SK-N-SH (cell line): ENCODE measurements at regions of chr1 and their contacts with region 1.

Region 1: GRCh38 chr1:201436393-201436792 is 14.9 kb upstream of the TNNI1 start:
- DNase-seq: no peak
- H3K4me3 ChIP-seq: no peak overlapping the region
- H3K27ac ChIP-seq: no peak overlapping the region
- H3K4me1 ChIP-seq: peaks cover 4 to 5% of the 10 kb centered on the region in 2 experiments; a peak in 2 of 4 replicates
- H3K27me3 ChIP-seq: no peaks in the 10 kb centered on the region; the same call in 1 of the 2 replicates
- CTCF ChIP-seq: peak; percentile 13; the same call in 1 of the 2 replicates
- EP300 ChIP-seq: no peak
- RAD21 ChIP-seq: no peak

Region 2: DNA sequence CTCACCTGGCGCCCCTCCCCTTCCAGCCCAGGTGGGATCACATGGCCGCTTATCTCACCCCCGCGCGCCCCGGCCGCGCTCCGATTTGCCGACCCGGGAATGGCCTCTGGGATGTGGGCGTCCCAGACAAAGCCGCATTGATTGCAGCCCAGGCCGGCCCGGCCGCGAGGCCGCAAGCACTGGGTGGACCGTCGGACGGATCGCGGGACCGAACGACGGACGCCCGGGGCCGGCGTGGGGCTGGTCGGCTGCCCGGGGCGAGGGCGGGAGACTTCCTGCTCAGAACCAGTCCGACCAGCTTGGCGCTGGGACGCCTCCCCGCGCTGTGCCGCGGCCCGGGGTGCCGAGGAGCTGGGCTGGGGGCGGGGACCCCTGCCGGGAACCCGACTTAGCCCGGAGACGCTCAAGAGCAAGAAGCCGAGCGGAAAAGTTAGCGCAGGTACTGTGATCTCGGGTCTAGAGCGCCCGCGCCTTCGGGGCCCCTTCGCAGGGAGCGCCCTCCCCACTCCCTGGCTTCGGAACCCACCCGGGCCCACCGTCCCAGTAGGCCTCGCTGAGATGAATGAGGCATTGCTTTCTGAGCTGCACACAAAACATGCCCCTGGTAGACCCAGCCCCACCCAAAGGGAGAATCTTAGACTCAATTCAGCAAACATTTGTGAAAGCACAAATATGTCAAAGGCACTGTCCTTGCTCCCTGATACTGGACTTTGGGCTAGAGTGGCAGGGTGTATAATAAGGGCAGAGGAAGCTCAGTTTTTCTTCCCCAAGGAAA is 36.9 kb before region 1 on chr1:
- CTCF ChIA-PET with region 1: interaction called, 11 read pairs
- POLR2A ChIA-PET with region 1: no interaction called
- DNase-seq: no peak
- H3K4me3 ChIP-seq: no peak overlapping the region
- H3K27ac ChIP-seq: no peak overlapping the region
- H3K4me1 ChIP-seq: peaks cover 0 to 9% of the 10 kb centered on the region in 2 experiments; a peak in 1 of 4 replicates
- H3K27me3 ChIP-seq: peaks cover 35% of the 10 kb centered on the region; the same call in 1 of the 2 replicates
- CTCF ChIP-seq: no peak
- EP300 ChIP-seq: no peak
- RAD21 ChIP-seq: no peak

Region 3: GRCh38 chr1:201447911-201448871 is 11.8 kb after region 1 on chr1:
- CTCF ChIA-PET with region 1: interaction called, 78 read pairs
- POLR2A ChIA-PET with region 1: no interaction called
- DNase-seq: peak; percentile 80
- H3K4me3 ChIP-seq: no peak overlapping the region; a peak in 1 of 4 replicates
- H3K27ac ChIP-seq: no peak overlapping the region
- H3K4me1 ChIP-seq: peaks cover 9 to 27% of the 10 kb centered on the region in 2 experiments; a peak in 3 of 4 replicates
- H3K27me3 ChIP-seq: no peaks in the 10 kb centered on the region
- CTCF ChIP-seq: peak; percentile 76
- EP300 ChIP-seq: no peak
- RAD21 ChIP-seq: peak; percentile 61

Region 4: DNA sequence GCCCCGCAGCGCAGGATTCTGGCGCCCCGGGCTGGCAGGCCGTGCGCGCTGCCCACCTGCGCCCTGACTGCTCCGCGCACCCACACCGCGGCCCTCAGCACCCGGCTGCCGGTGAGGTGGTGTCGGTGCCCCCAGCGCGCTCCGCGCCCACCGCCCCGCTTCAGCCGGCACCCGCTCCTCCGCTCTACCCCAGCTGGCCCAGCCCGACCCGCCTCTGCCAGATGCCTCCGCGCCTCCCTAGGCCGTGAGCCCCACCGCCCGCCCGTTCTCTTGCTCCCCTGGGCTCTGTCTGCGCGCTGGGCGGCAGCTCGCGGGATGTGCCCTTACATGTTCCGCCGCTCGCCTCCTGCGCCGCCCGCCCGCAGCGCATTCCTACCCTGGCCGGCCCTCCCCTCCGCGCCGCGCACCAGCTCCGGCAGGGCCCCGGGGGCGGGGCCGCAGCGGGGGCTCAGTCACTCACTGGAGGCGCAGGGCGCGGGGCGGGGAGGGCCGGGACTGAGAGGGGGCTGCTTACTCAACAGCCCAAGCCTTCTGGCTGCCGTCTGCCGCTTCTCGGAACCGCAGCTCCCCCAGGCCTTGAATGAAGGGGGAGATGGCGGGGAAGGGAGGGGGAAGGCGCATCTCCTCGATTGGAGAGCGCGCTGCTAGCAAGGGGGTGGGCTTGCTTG is 32.6 kb after region 1 on chr1 and contains the start of gene PHLDA3:
- CTCF ChIA-PET with region 1: interaction called, 24 read pairs
- POLR2A ChIA-PET with region 1: interaction called, 3 read pairs
- DNase-seq: peak; percentile 93
- H3K4me3 ChIP-seq: peak within 1 kb of the TSS; percentile 77 to 82
- H3K27ac ChIP-seq: peak within 1 kb of the TSS; percentile 83 to 94
- H3K4me1 ChIP-seq: peaks cover 13 to 29% of the 10 kb centered on the region in 2 experiments; a peak in 3 of 4 replicates
- H3K27me3 ChIP-seq: no peaks in the 10 kb centered on the region
- CTCF ChIP-seq: no peak
- EP300 ChIP-seq: no peak
- RAD21 ChIP-seq: no peak
- polyA plus RNA-seq, gene PHLDA3: 105 and 108 TPM in 2 replicates

Region 5: GRCh38 chr1:201506556-201507359 is 70.4 kb after region 1 on chr1 and contains the start of gene CSRP1:
- CTCF ChIA-PET with region 1: interaction called, 85 read pairs
- POLR2A ChIA-PET with region 1: no interaction called
- DNase-seq: peak; percentile 96
- H3K4me3 ChIP-seq: peak within 1 kb of the TSS; percentile 57 to 65
- H3K27ac ChIP-seq: peak within 1 kb of the TSS; percentile 50 to 93
- H3K4me1 ChIP-seq: peaks cover 24 to 33% of the 10 kb centered on the region in 2 experiments; a peak in 3 of 4 replicates
- H3K27me3 ChIP-seq: no peaks in the 10 kb centered on the region
- CTCF ChIP-seq: no peak
- EP300 ChIP-seq: no peak
- RAD21 ChIP-seq: no peak
- polyA plus RNA-seq, gene CSRP1: 317 and 373 TPM in 2 replicates

Region 6: GRCh38 chr1:201877877-201878401 is 441.5 kb after region 1 on chr1:
- CTCF ChIA-PET with region 1: no interaction called
- POLR2A ChIA-PET with region 1: no interaction called
- DNase-seq: peak; percentile 46
- H3K4me3 ChIP-seq: peak overlapping the region in 1 of 2 experiments; percentile 24; a peak in 1 of 4 replicates
- H3K27ac ChIP-seq: no peak overlapping the region
- H3K4me1 ChIP-seq: peaks cover 3 to 8% of the 10 kb centered on the region in 2 experiments; a peak in 3 of 4 replicates
- H3K27me3 ChIP-seq: no peaks in the 10 kb centered on the region
- CTCF ChIP-seq: peak; percentile 73
- EP300 ChIP-seq: no peak
- RAD21 ChIP-seq: peak; percentile 67